ENCODE measurements at regions of chr1 and their contacts with region 1.

Region 1: GRCh38 chr1:51378871-51379270 is 48.5 kb upstream of the TTC39A start:
- DNase-seq: no peak
- ATAC-seq: no peak
- H3K4me3 ChIP-seq: no peak overlapping the region
- H3K27ac ChIP-seq: no peak overlapping the region
- H3K4me1 ChIP-seq: no peaks in the 10 kb centered on the region
- H3K27me3 ChIP-seq: no peaks in the 10 kb centered on the region
- CTCF ChIP-seq: no peak

Region 2: DNA sequence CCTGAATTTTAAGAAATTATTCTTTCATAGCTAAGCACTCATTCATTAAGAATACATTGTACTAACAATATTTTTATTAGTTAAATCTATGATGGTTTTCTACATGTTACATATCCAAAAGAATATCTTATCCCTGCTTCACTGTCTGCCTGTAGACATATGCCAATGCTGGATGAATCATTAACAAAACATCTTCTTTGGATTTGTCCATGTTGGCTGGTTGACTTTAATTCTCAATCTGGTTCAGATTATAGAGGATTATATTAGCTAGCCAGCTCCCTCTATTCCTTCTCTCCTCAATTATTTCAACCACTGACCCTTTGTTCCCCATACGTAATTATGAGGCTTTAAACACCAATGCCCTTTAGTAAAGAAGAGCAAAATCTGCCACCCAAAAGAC is 816.8 kb before region 1 on chr1:
- intact Hi-C with region 1: no loop called
- DNase-seq: no peak
- ATAC-seq: no peak
- H3K4me3 ChIP-seq: no peak overlapping the region
- H3K27ac ChIP-seq: no peak overlapping the region
- H3K4me1 ChIP-seq: no peaks in the 10 kb centered on the region
- H3K27me3 ChIP-seq: no peaks in the 10 kb centered on the region
- CTCF ChIP-seq: no peak

Region 3: DNA sequence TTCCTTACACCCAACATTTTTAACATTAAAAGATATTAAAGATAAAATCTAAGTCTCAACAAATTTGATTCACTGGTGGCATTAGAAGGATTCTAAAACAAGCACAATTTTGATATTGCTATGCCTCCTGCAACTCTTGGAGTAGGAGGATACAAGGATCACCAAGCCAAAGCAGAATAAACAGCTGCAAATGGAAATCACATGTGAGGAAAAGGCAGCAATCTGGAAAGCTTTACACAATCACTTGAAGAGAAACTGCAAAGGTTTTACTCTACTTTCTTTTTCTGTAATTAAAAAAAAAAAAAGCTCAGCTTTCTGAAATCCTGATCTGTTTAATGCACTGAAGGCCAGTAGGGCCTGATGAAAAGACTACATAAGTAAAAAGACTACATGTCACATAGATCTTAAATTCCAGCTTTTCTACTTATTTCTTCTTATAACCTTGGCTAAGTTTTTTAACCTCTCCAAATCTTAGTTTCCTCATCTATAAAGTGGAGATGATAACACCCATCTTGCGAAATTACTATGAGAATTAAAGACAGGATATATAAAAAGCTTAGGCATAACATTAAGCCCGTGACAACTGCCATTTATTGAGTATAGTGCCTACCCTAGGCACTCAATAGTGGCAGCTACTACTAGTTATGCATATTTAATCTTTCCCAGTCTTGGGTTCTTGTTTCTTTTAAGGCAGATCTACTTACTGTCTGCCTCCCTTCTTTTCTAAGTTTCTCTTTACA is 66.7 kb after region 1 on chr1:
- intact Hi-C with region 1: loop called in 1 of 2 experiments (anchors 5 kb)
- DNase-seq: no peak
- ATAC-seq: no peak
- H3K4me3 ChIP-seq: no peak overlapping the region
- H3K27ac ChIP-seq: no peak overlapping the region
- H3K4me1 ChIP-seq: peaks cover 11% of the 10 kb centered on the region
- H3K27me3 ChIP-seq: no peaks in the 10 kb centered on the region
- CTCF ChIP-seq: no peak

Measured in psoas muscle (tissue), 8 donors.